WTC11 (cell line): ENCODE measurements at regions of chr19 and their contacts with region 1.

Region 1: GRCh38 chr19:44845612-44846454 is at the start of gene NECTIN2:
- DNase-seq: peak; percentile 100
- ATAC-seq: peak; percentile 59
- H3K4me3 Mint-ChIP-seq: peak within 1 kb of the TSS; percentile 97
- H3K27ac Mint-ChIP-seq: peak within 1 kb of the TSS; percentile 99
- H3K4me1 Mint-ChIP-seq: peaks cover 23% of the 10 kb centered on the region
- H3K27me3 Mint-ChIP-seq: peaks cover 14% of the 10 kb centered on the region
- CTCF ChIP-seq: peak; percentile 57
- total RNA-seq, gene NECTIN2: 164 to 170 TPM (median 168 TPM) in 3 replicates

Region 2: DNA sequence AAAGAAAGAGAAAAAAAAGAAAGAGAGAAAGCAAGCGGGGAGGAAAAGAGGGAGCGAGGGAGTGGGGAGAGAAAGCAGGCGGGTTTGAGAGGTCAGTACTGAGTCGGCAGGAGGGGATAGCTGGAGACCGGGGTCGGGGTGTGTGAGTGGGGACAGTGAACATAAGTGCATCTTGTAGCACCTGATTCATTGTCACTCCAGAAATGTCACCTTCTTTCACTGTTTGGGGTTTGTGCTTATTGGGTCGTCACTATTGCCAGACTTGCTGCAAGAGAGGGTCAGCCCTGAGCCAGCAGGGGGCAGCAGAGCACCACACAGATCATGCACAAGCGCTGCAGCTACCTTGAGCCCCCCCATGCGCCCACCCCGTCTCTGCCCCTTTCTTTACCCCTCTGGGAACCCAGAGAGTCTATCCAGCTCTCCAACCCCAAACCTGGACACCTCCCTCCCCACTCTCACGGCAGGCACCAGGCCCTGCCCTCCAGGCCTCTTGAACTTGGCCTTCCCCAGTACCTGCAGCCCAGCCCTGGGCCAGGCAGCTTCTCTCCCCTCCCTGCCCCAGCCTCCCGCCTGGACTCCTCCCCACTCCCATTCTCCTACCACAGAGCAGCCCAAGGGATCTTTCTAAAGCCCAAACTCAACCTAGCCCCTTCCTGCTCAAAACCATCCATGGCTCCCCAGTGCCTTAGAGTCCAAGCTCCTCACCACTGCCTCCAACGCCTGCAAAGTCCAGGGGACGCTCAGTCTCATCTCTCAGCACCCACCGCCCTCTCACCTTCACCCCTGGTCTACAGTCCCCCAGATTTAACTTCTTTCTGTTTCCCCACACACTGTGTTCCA is 156.6 kb before region 1 on chr19:
- CTCF ChIA-PET with region 1: interaction called, 10 read pairs
- POLR2A ChIA-PET with region 1: interaction called, 4 read pairs
- DNase-seq: peak; percentile 94
- ATAC-seq: peak; percentile 84
- H3K4me3 Mint-ChIP-seq: peak overlapping the region; percentile 11; the same call in 1 of the 2 replicates
- H3K27ac Mint-ChIP-seq: no peak overlapping the region
- H3K4me1 Mint-ChIP-seq: peaks cover 22% of the 10 kb centered on the region
- H3K27me3 Mint-ChIP-seq: no peaks in the 10 kb centered on the region
- CTCF ChIP-seq: peak; percentile 97

Region 3: GRCh38 chr19:44785246-44785645 is 60.6 kb before region 1 on chr19:
- CTCF ChIA-PET with region 1: interaction called, 26 read pairs
- POLR2A ChIA-PET with region 1: interaction called, 8 read pairs
- DNase-seq: no peak
- ATAC-seq: no peak
- H3K4me3 Mint-ChIP-seq: no peak overlapping the region
- H3K27ac Mint-ChIP-seq: no peak overlapping the region
- H3K4me1 Mint-ChIP-seq: peaks cover 5% of the 10 kb centered on the region; the same call in 1 of the 2 replicates
- H3K27me3 Mint-ChIP-seq: no peaks in the 10 kb centered on the region
- CTCF ChIP-seq: no peak

Region 4: DNA sequence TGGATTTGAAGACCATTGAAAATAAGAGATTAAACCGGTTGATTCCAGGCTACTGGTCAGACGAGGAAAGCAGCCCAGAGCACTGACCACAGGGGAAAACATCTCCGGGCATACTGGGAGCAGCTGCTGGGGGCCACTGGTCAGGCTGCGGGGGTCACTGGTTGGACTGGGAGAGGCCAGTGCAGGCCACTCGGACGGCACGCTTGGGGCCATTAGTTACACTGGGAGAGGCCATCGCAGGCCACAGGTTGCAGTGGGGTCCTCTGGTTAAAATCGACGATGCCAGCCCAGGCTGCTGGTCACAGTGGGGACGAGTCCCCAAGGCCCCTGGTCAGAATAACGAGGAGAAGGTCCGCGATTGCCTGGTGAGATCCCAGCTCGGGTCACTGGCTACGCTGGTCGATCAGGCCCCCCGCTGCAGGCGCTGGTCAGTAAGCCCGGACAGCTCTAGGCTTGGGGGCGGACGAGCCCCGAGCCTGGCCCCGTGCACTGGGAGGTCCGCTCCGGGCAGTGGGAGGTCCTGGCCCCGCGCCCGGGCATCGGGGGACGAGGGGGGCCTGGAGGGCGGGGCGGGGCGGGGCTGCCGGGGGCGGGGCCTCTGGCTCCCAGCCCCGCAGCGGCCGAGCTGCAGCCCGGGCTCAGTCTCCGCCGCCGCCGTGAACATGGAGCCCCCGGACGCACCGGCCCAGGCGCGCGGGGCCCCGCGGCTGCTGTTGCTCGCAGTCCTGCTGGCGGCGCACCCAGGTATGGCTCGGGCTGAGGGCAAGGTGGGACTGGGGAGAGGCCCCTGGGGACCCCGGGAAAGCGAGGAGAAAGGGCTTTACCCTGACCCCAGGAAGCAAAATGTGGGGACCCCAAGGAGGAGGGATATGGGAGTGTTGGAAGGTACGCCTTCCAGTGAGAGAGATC is 37.1 kb before region 1 on chr19 and contains the start of gene BCAM:
- CTCF ChIA-PET with region 1: interaction called, 24 read pairs
- POLR2A ChIA-PET with region 1: interaction called, 10 read pairs
- DNase-seq: peak; percentile 70
- ATAC-seq: peak; percentile 30
- H3K4me3 Mint-ChIP-seq: peak within 1 kb of the TSS; percentile 75
- H3K27ac Mint-ChIP-seq: peak within 1 kb of the TSS; percentile 95
- H3K4me1 Mint-ChIP-seq: peaks cover 42% of the 10 kb centered on the region
- H3K27me3 Mint-ChIP-seq: peaks cover 78% of the 10 kb centered on the region
- CTCF ChIP-seq: no peak
- total RNA-seq, gene BCAM: 73.1 to 89.5 TPM (median 80.0 TPM) in 3 replicates

Region 5: GRCh38 chr19:45152504-45153338 is 306.9 kb after region 1 on chr19:
- CTCF ChIA-PET with region 1: no interaction called
- POLR2A ChIA-PET with region 1: no interaction called
- DNase-seq: peak; percentile 75
- ATAC-seq: peak; percentile 23
- H3K4me3 Mint-ChIP-seq: peak overlapping the region; percentile 54
- H3K27ac Mint-ChIP-seq: no peak overlapping the region
- H3K4me1 Mint-ChIP-seq: peaks cover 15% of the 10 kb centered on the region
- H3K27me3 Mint-ChIP-seq: peaks cover 58% of the 10 kb centered on the region
- CTCF ChIP-seq: no peak